BJ (cell line): ENCODE measurements at regions of chr6 and their contacts with region 1.

Region 1: GRCh38 chr6:34196126-34196830 is 40.4 kb upstream of the HMGA1 start:
- DNase-seq: peak; percentile 3
- H3K4me3 ChIP-seq: peak overlapping the region; percentile 44
- H3K27me3 ChIP-seq: no peaks in the 10 kb centered on the region
- CTCF ChIP-seq: peak; percentile 91

Region 2: DNA sequence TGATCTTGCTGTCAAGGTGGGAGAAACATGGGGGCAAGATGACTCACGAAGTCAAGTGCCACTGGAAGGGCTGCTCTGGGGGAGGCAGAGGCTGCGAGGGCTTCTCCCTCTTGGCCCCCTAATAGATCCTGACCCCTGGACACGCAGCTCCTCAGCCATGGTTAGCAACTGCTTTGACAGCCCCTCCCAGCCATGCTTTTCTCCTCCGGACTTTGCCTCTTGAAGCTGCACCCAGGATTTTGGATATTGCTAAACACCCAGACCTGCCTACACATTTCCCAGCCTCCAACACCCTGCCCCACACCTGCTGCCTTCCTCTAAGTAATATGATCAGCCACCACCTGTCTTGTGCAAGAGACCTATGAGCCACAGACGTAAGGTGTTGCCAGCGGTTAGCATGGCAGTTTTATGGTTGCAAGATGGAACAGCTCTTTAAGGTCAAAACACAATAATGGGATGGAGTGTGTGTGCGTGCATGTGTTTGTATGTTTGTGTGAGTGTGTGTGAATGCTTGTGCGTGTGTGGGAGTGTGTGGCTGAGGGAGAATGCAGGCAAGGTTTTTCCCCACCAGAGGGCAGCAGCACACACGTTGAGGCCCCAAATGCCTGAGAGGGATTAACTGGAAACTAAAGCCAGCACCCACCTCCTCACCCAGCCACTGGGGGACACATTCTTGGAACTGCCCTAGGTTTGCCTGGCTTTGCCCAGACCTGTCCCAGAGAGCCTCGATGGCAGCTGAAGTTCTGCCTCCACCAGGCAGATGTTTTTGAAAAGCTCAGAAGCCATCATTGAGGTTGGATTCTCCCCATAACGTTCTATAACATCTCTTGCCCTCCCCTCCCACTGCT is 452.1 kb before region 1 on chr6:
- CTCF ChIA-PET with region 1: no interaction called
- POLR2A ChIA-PET with region 1: no interaction called
- DNase-seq: no peak
- H3K4me3 ChIP-seq: no peak overlapping the region
- H3K27me3 ChIP-seq: no peaks in the 10 kb centered on the region
- CTCF ChIP-seq: peak; percentile 93

Region 3: GRCh38 chr6:34236131-34236996 is 40.1 kb after region 1 on chr6 and contains the start of gene HMGA1:
- CTCF ChIA-PET with region 1: interaction called, 8 read pairs
- POLR2A ChIA-PET with region 1: interaction called, 19 read pairs
- DNase-seq: no peak
- H3K4me3 ChIP-seq: peak within 1 kb of the TSS; percentile 80
- H3K27me3 ChIP-seq: no peaks in the 10 kb centered on the region
- CTCF ChIP-seq: no peak
- polyA plus RNA-seq, gene HMGA1: 84.1 and 168 TPM in 2 replicates

Region 4: DNA sequence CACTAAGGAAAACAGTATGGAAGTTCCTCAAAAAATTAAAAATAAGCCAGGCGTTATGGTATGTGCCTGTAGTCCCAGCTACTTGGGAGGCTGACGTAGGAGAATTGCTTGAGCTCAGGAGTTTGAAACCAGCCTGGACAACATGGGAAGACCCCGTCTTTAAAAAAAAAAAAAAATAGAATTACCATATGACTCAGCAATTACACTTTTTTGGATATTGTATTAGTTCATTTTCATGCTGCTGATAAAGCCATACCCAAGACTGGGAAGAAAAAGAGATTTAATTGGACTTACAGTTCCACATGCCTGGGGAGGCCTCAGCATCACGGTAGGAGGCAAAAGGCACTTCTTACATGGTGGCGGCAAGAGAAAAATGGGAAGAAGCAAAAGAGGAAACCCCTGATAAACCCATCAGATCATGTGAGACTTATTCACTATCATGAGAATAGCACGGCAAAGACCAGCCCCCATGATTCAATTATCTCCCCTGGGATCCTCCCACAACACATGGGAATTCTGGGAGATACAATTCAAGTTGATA is 63.3 kb after region 1 on chr6:
- CTCF ChIA-PET with region 1: no interaction called
- POLR2A ChIA-PET with region 1: no interaction called
- DNase-seq: no peak
- H3K4me3 ChIP-seq: no peak overlapping the region
- H3K27me3 ChIP-seq: no peaks in the 10 kb centered on the region
- CTCF ChIP-seq: no peak

Region 5: DNA sequence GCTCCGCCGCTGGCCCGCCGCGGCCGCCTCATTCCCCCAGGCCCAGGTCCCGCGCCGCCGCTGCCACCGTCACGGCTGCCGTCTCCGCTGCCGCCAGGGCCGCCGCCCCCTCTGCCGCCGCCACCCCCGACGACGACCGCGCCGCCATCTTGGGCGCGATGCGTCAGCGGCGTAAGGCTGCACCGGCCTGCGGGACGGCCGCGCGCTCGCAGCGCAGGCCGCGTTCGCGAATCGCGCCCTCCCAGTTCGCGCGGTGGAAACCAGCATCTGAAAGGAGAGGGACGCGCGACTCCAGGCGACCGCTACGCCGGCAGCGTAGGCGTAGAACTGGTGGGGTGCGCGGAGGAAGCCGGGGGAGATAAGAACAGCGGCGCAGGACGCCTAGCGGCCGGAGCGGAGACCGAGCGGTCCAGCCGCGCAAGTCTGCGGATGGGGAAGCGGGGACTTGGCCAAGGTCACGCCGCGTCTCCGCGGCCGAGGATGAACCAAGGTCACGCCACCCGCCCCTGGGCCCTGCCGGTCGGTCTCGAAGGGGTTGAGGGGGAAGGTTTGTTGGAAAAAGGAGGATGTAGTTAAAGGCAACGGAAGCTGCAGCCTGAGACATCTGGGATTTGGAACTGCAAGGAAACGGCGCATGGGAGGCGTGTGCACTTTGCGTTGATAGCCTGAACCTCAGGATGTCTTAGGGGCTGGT is 196.4 kb after region 1 on chr6 and contains the start of gene NUDT3:
- CTCF ChIA-PET with region 1: interaction called, 10 read pairs
- POLR2A ChIA-PET with region 1: no interaction called
- DNase-seq: peak; percentile 66
- H3K4me3 ChIP-seq: peak within 1 kb of the TSS; percentile 74
- H3K27me3 ChIP-seq: no peaks in the 10 kb centered on the region
- CTCF ChIP-seq: peak; percentile 94
- polyA plus RNA-seq, gene NUDT3: 9.6 and 14.9 TPM in 2 replicates

Region 6: GRCh38 chr6:34595332-34596184 is 399.3 kb after region 1 on chr6:
- CTCF ChIA-PET with region 1: interaction called, 11 read pairs
- POLR2A ChIA-PET with region 1: no interaction called
- DNase-seq: peak; percentile 26
- H3K4me3 ChIP-seq: no peak overlapping the region
- H3K27me3 ChIP-seq: no peaks in the 10 kb centered on the region
- CTCF ChIP-seq: no peak